Endothelial cell of umbilical vein (primary cell): ENCODE measurements at regions of chr5 and their contacts with region 1.

Region 1: DNA sequence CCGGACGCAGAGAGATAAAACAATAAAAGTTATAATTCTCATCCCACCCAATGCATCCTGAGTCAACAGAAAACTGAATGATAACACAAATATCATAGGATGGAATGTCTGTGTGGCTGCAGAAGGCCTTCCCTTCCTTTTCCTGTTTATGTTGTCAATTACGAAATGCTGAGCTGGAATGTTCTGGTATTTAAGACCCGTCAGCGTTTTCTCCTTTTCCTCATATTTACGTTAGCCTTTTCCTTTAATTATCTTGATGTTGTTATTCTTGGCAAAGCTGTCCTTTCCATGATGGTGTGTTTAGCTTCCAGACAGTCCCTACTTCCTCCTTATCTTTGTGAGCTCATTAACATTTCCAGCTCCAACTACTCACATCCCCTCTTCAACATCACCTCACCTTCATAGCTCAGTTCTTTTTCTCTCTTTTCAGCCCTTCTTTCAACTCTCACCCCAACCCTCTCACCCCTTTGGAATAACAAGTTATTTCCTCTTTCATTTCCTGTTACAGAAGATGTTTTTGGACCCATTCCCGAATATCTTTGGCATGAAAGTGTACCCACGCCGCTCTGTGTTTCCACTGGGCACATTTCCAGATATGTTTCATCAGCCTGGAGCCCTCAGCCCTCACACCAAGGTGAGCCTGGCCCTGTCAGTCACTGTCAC is 221.6 kb downstream of the NR2F1-AS1 start:
- DNase-seq: peak; percentile 98
- H3K4me3 ChIP-seq: peak overlapping the region in 2 of 3 experiments; percentile 10 to 40
- H3K27ac ChIP-seq: peak overlapping the region; percentile 91
- H3K4me1 ChIP-seq: peaks cover 49% of the 10 kb centered on the region
- H3K27me3 ChIP-seq: no peaks in the 10 kb centered on the region
- CTCF ChIP-seq: no peak
- POLR2A ChIP-seq: peak; percentile 91

Region 2: DNA sequence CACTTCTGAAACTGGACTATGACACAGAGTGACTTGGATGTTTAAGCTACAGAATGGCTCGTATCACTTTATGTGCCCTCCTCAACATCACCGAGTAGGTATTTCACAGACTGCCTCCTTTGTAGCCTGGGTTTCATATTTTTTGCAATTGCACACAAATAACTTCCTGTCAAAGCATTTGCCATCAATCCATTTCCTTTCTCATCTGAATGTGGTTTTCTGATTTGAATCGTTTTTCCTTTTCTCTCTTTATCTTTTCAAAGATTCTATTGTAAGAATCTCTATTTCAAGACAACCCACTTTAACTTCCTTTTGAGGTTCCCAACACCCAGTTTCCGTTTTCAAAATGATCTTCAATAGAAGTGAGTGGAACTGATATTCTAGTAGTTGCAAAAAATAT is 1412.6 kb before region 1 on chr5:
- CTCF ChIA-PET with region 1: no interaction called
- POLR2A ChIA-PET with region 1: no interaction called
- dilution Hi-C with region 1: no loop called
- intact Hi-C with region 1: no loop called
- DNase-seq: no peak
- H3K4me3 ChIP-seq: no peak overlapping the region
- H3K27ac ChIP-seq: no peak overlapping the region
- H3K4me1 ChIP-seq: no peaks in the 10 kb centered on the region
- H3K27me3 ChIP-seq: no peaks in the 10 kb centered on the region
- CTCF ChIP-seq: no peak
- POLR2A ChIP-seq: no peak

Region 3: GRCh38 chr5:93078082-93079038 is 281.1 kb before region 1 on chr5:
- CTCF ChIA-PET with region 1: no interaction called
- POLR2A ChIA-PET with region 1: no interaction called
- dilution Hi-C with region 1: no loop called
- intact Hi-C with region 1: loop called (anchors 1 kb)
- DNase-seq: peak; percentile 99
- H3K4me3 ChIP-seq: no peak overlapping the region
- H3K27ac ChIP-seq: peak overlapping the region; percentile 89
- H3K4me1 ChIP-seq: peaks cover 18% of the 10 kb centered on the region
- H3K27me3 ChIP-seq: no peaks in the 10 kb centered on the region
- CTCF ChIP-seq: no peak
- POLR2A ChIP-seq: peak; percentile 50

Region 4: DNA sequence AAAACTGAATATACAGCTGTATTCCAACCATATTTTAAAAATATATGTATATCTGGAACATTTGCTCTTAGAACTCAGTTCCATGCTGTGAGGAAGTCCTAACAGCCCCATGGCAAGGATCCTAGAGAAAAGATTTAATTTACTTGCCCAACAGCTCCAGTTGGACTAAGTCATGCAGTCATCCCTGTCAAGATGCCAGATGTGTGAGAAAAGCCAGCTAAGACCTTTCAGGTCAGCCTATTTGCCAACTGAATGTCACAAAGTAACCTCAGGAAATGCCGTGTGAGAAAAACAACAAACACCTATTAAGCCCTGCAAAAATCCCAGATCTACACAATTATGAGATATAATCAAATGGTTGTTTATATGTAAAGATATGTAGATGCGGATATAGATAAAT is 194.7 kb before region 1 on chr5:
- CTCF ChIA-PET with region 1: interaction called, 9 read pairs
- POLR2A ChIA-PET with region 1: no interaction called
- dilution Hi-C with region 1: no loop called
- intact Hi-C with region 1: loop called (anchors 1 kb)
- DNase-seq: peak; percentile 80
- H3K4me3 ChIP-seq: no peak overlapping the region
- H3K27ac ChIP-seq: peak overlapping the region; percentile 100
- H3K4me1 ChIP-seq: peaks cover 45% of the 10 kb centered on the region
- H3K27me3 ChIP-seq: no peaks in the 10 kb centered on the region
- CTCF ChIP-seq: no peak
- POLR2A ChIP-seq: no peak

Region 5: DNA sequence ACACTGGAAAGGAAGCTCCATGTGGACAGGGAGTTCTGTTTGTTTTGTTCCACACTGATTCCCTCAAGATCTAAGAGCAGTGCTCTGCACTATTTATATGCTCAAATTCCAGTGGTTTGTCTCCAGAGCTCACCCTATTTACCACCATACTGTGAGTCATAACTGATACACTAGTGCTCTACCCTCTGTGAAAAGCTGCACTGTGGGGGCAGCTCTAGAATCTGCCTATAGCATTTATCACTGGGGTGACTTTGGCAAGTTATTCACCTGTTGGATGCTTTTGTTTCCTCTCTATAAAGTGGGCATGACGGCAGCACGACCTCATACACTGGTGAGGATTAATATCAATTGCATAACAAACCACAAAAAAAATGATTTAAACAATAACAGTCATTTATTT is 86.3 kb before region 1 on chr5:
- CTCF ChIA-PET with region 1: interaction called, 11 read pairs
- POLR2A ChIA-PET with region 1: interaction called, 4 read pairs
- dilution Hi-C with region 1: no loop called
- intact Hi-C with region 1: loop called (anchors 1 kb)
- DNase-seq: peak; percentile 55
- H3K4me3 ChIP-seq: no peak overlapping the region
- H3K27ac ChIP-seq: peak overlapping the region; percentile 99
- H3K4me1 ChIP-seq: peaks cover 30% of the 10 kb centered on the region
- H3K27me3 ChIP-seq: no peaks in the 10 kb centered on the region
- CTCF ChIP-seq: no peak
- POLR2A ChIP-seq: no peak

Region 6: GRCh38 chr5:93342563-93343061 is 16.8 kb before region 1 on chr5:
- CTCF ChIA-PET with region 1: no interaction called
- POLR2A ChIA-PET with region 1: no interaction called
- dilution Hi-C with region 1: no loop called
- intact Hi-C with region 1: no loop called
- DNase-seq: no peak
- H3K4me3 ChIP-seq: no peak overlapping the region
- H3K27ac ChIP-seq: no peak overlapping the region
- H3K4me1 ChIP-seq: no peaks in the 10 kb centered on the region
- H3K27me3 ChIP-seq: no peaks in the 10 kb centered on the region
- CTCF ChIP-seq: no peak
- POLR2A ChIP-seq: no peak

Region 7: GRCh38 chr5:93512799-93513198 is 153.4 kb after region 1 on chr5:
- CTCF ChIA-PET with region 1: no interaction called
- POLR2A ChIA-PET with region 1: no interaction called
- dilution Hi-C with region 1: no loop called
- intact Hi-C with region 1: loop called (anchors 1 kb)
- DNase-seq: peak; percentile 95
- H3K4me3 ChIP-seq: no peak overlapping the region
- H3K27ac ChIP-seq: peak overlapping the region; percentile 86
- H3K4me1 ChIP-seq: peaks cover 25% of the 10 kb centered on the region
- H3K27me3 ChIP-seq: no peaks in the 10 kb centered on the region
- CTCF ChIP-seq: no peak
- POLR2A ChIP-seq: no peak